Activated CD8-positive, alpha-beta T cell treated with anti-CD3 and anti-CD28 coated beads for 36 hours (primary cell): ENCODE measurements at regions of chr16 and their contacts with region 1.

Region 1: GRCh38 chr16:50024684-50025536 is at the start of gene CNEP1R1:
- DNase-seq: peak; percentile 94
- ATAC-seq: peak; percentile 97
- H3K4me3 Mint-ChIP-seq: peak within 1 kb of the TSS; percentile 92
- H3K27ac Mint-ChIP-seq: peak within 1 kb of the TSS; percentile 86
- H3K4me1 Mint-ChIP-seq: peaks cover 22% of the 10 kb centered on the region
- H3K27me3 Mint-ChIP-seq: no peaks in the 10 kb centered on the region
- CTCF ChIP-seq: peak; percentile 98
- total RNA-seq, gene CNEP1R1: 19.1 to 19.9 TPM

Region 2: GRCh38 chr16:50037662-50038220 is 12.8 kb after region 1 on chr16:
- CTCF ChIA-PET with region 1: interaction called, 28 read pairs
- POLR2A ChIA-PET with region 1: interaction called, 3 read pairs
- intact Hi-C with region 1: no loop called
- DNase-seq: no peak
- ATAC-seq: no peak
- H3K4me3 Mint-ChIP-seq: no peak overlapping the region
- H3K27ac Mint-ChIP-seq: no peak overlapping the region
- H3K4me1 Mint-ChIP-seq: peaks cover 7% of the 10 kb centered on the region
- H3K27me3 Mint-ChIP-seq: no peaks in the 10 kb centered on the region
- CTCF ChIP-seq: no peak

Region 3: DNA sequence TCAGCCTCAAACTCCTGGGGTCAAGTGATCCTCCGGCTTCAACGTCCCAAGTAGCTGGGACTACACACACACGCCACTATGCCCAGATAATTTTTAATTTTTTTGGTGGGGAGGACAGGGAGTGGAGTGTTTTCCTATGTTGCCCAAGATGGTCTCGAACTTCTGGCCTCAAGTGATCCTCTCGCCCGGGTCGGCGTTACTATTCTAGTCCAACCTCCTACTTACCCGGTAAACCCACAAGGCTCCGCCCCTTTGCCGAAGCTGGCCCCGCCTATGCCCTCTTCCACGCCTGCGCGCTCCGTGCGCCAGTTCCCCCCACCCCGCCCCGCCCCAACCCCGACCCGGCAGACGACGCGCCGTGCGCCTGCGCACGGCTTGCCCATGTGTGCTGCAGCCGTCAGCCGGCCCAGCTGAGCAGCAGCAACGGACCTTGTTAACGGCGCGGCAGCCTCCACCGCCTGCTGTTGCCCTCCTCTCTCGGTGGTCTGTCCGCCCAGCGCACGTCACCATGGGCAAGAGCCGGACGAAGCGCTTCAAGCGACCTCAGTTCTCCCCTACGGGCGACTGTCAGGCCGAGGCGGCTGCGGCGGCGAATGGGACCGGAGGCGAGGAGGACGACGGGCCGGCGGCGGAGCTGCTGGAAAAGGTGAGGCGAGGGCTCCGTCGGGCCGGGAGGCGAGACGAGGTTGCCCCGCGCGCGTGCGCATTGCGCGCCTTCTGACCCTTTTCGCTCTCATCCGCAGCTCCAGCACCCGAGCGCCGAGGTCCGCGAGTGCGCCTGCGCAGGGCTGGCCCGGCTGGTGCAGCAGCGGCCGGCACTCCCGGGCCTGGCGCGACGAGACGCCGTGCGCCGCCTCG is 40.9 kb after region 1 on chr16 and contains the start of gene HEATR3:
- CTCF ChIA-PET with region 1: interaction called, 74 read pairs
- POLR2A ChIA-PET with region 1: interaction called, 3 read pairs
- intact Hi-C with region 1: no loop called
- DNase-seq: peak; percentile 95
- ATAC-seq: peak; percentile 84
- H3K4me3 Mint-ChIP-seq: peak within 1 kb of the TSS; percentile 84
- H3K27ac Mint-ChIP-seq: peak within 1 kb of the TSS; percentile 91
- H3K4me1 Mint-ChIP-seq: peaks cover 32% of the 10 kb centered on the region
- H3K27me3 Mint-ChIP-seq: no peaks in the 10 kb centered on the region
- CTCF ChIP-seq: no peak
- total RNA-seq, gene HEATR3: 23.6 to 29.6 TPM

Region 4: GRCh38 chr16:50152807-50153452 is 128.0 kb after region 1 on chr16 and contains the start of gene TENT4B:
- CTCF ChIA-PET with region 1: interaction called, 10 read pairs
- POLR2A ChIA-PET with region 1: interaction called, 4 read pairs
- intact Hi-C with region 1: no loop called
- DNase-seq: peak; percentile 86
- ATAC-seq: peak; percentile 79
- H3K4me3 Mint-ChIP-seq: peak within 1 kb of the TSS; percentile 83
- H3K27ac Mint-ChIP-seq: peak within 1 kb of the TSS; percentile 98
- H3K4me1 Mint-ChIP-seq: peaks cover 32% of the 10 kb centered on the region
- H3K27me3 Mint-ChIP-seq: no peaks in the 10 kb centered on the region
- CTCF ChIP-seq: no peak
- total RNA-seq, gene TENT4B: 19.0 to 19.2 TPM

Region 5: DNA sequence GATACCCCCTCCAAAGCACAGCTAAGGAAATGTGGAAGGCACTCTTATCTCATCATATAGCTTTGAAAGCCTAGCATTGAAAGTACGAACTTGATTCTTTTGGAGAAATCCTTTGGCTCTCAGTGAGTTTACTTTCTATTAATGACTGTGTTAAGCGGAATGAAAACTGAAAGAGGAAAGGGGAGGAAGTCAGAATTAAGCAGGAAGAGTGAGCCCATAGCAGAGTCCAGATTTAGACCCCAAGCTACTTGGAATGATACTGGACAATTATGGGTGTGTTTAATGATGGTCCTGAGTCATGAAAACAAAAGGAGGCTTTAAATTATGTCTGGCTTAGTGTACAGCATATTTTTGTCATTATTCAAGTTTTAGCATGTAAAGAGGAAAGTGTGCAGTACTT is 170.4 kb after region 1 on chr16:
- CTCF ChIA-PET with region 1: interaction called, 12 read pairs
- POLR2A ChIA-PET with region 1: no interaction called
- intact Hi-C with region 1: no loop called
- DNase-seq: no peak
- ATAC-seq: no peak
- H3K4me3 Mint-ChIP-seq: no peak overlapping the region
- H3K27ac Mint-ChIP-seq: peak overlapping the region; percentile 22
- H3K4me1 Mint-ChIP-seq: peaks cover 58% of the 10 kb centered on the region
- H3K27me3 Mint-ChIP-seq: no peaks in the 10 kb centered on the region
- CTCF ChIP-seq: no peak

Region 6: DNA sequence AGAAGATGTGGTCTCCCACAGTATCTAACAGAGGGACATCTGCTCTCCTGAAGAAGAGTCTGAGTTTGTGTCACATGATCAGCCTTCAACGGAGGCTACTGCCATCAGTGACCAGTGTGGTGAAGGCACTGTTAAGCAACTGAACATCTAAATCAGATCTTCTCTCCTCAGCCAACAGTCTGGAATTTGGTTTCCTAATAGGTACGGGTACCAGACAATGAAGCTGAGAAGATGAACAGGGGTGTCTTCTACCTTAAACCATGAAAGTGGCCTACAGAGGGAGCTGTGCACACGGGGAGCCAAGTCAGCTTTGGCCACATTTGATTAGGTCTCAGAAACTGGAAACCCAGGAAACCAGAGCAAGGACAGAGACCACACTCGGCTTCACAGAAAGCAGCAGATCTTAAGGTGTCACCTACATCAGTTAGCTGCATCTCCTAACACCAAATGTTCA is 302.1 kb after region 1 on chr16:
- CTCF ChIA-PET with region 1: interaction called, 15 read pairs
- POLR2A ChIA-PET with region 1: no interaction called
- intact Hi-C with region 1: no loop called
- DNase-seq: peak; percentile 86
- ATAC-seq: peak; percentile 95
- H3K4me3 Mint-ChIP-seq: no peak overlapping the region
- H3K27ac Mint-ChIP-seq: peak overlapping the region; percentile 73
- H3K4me1 Mint-ChIP-seq: peaks cover 51% of the 10 kb centered on the region
- H3K27me3 Mint-ChIP-seq: no peaks in the 10 kb centered on the region
- CTCF ChIP-seq: peak; percentile 65

Region 7: GRCh38 chr16:50741808-50742575 is 717.1 kb after region 1 on chr16 and contains the start of gene CYLD:
- CTCF ChIA-PET with region 1: interaction called, 4 read pairs
- POLR2A ChIA-PET with region 1: no interaction called
- intact Hi-C with region 1: loop called (anchors 10 kb)
- DNase-seq: peak; percentile 100
- ATAC-seq: peak; percentile 91
- H3K4me3 Mint-ChIP-seq: peak within 1 kb of the TSS; percentile 93
- H3K27ac Mint-ChIP-seq: peak within 1 kb of the TSS; percentile 97
- H3K4me1 Mint-ChIP-seq: peaks cover 38% of the 10 kb centered on the region
- H3K27me3 Mint-ChIP-seq: no peaks in the 10 kb centered on the region
- CTCF ChIP-seq: no peak
- total RNA-seq, gene CYLD: 86.4 to 94.4 TPM